Cardiac septum (tissue), 1 donor: ENCODE measurements at regions of chr1 and their contacts with region 1.

Region 1: DNA sequence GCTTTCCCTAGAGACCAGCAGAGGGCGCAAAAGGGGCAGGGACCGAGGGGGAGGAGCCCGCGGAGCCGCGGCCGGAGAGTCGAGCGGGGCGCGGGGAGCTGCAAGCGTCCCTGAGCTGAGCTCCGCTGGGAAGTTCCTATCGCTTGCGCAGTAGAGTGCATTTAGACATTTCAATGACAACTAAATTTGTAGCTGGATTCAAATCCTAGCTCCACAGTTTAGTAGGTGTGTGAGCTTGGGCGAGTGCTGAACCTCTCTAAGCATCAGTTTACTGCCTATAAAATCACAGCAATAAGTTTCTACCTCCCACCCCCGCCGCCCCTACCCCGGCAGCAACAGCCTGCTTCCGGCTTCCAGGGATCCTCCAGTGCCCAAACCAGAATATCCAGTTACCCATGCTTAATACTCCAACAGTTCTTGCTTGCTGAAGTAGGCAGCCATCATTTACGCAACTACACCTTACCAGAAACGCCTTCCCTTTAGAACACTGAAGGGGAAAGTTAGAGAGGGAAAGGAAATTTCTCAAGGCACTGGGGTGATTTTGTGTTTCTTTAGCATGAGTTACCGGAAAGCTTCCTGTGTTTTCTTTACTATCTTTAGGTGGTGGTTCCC is 9.1 kb downstream of the TLR5 start:
- DNase-seq: peak; percentile 93

Region 2: GRCh38 chr1:222792744-222793143 is 341.2 kb before region 1 on chr1:
- intact Hi-C with region 1: loop called (anchors 10 kb)
- DNase-seq: no peak

Region 3: DNA sequence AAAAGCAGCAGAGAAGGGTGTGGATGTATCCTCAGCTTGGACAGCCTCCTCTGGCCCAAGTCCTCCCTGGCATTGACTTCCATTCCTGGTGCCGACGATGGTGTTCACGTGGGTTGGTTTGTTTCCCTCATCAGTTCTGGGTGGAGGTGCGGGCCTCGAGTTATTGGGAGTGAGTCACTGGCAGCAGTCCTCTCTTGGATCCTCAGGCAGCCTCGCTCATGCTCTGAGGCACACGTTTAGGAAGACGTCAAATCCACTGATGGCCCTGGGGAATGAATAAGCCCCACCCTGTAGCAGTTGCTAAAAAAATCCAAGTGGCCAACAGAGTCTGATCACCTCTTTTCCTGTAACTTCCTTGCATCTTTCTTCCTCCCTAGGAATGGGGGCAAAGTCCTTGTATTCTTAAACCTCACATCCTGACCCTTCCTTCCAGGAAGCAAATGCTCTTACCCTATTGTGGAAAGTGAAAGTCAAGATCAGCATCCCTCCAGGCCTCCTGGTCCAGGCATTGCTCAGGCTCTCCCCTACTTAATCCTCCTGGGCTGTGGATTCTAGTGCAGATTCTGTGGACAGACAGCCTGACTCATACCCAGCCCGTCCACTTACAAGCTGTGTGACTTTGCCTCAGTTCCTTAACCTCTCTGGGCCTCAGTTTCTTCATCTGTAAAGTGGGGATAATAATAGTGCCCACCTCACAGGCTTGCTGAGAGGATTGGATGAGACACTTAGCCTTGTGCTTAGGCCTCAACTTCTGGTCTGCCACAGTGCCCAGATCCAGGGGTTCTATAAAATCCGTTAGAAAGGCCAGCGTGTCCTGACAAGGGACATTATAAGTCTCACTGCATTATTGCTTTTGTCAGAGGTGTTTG is 102.0 kb before region 1 on chr1:
- intact Hi-C with region 1: loop called (anchors 10 kb)
- DNase-seq: peak; percentile 81

Region 4: GRCh38 chr1:223244366-223245103 is 110.6 kb after region 1 on chr1:
- intact Hi-C with region 1: loop called (anchors 5 kb)
- DNase-seq: no peak

Region 5: GRCh38 chr1:223683586-223684487 is 549.9 kb after region 1 on chr1:
- intact Hi-C with region 1: loop called (anchors 5 kb)
- DNase-seq: no peak